ENCODE measurements at regions of chr12 and their contacts with region 1.

Region 1: DNA sequence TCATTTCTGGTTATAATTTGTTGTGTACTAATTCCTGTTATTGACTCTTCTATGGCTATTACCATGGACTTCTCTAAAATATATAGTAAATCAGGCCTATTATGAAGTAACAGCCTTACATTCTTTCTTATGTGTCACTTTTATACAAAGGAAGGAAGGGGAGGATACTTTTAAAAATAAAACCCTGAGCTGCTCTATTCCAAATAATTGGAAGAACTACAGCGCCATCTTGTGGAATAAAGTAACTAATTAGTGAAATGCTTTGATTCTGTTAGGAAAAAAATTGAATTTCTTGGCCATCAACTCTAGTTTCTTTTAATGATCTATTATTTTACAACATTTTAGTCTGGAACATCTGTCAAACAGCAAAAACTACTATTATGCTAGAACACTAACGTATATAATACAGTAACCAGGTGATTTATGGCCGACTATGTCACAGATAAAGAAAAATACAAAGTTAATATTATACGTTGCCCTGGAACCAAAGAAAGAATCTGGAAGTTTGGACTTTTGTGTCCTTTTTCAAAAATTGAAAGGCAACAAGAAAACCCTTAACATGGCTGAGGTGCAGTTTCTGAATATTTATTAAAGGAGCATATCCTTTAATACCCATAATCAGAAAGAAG is 55.0 kb upstream of the NELL2 start:
- DNase-seq: no peak
- H3K4me3 ChIP-seq: no peak overlapping the region
- H3K27ac ChIP-seq: no peak overlapping the region
- H3K4me1 ChIP-seq: no peaks in the 10 kb centered on the region
- H3K27me3 ChIP-seq: no peaks in the 10 kb centered on the region
- CTCF ChIP-seq: peak; percentile 48 to 69 (median 57)
- EP300 ChIP-seq: no peak
- POLR2A ChIP-seq: no peak

Region 2: GRCh38 chr12:43988838-43989560 is 942.1 kb before region 1 on chr12:
- in situ Hi-C with region 1: loop called in 1 of 4 experiments (anchors 25 kb)
- intact Hi-C with region 1: no loop called
- DNase-seq: no peak
- H3K4me3 ChIP-seq: no peak overlapping the region
- H3K27ac ChIP-seq: no peak overlapping the region
- H3K4me1 ChIP-seq: no peaks in the 10 kb centered on the region
- H3K27me3 ChIP-seq: no peaks in the 10 kb centered on the region
- CTCF ChIP-seq: no peak
- EP300 ChIP-seq: no peak
- POLR2A ChIP-seq: no peak

Region 3: GRCh38 chr12:44015335-44015941 is 915.6 kb before region 1 on chr12:
- in situ Hi-C with region 1: loop called in 3 of 4 experiments (anchors 10 to 25 kb)
- intact Hi-C with region 1: loop called (anchors 10 kb)
- DNase-seq: no peak
- H3K4me3 ChIP-seq: no peak overlapping the region
- H3K27ac ChIP-seq: no peak overlapping the region
- H3K4me1 ChIP-seq: peaks cover 0 to 4% (median 0%) of the 10 kb centered on the region in 4 donors
- H3K27me3 ChIP-seq: no peaks in the 10 kb centered on the region
- CTCF ChIP-seq: peak; percentile 32 to 54 (median 51)
- EP300 ChIP-seq: no peak
- POLR2A ChIP-seq: no peak

Region 4: DNA sequence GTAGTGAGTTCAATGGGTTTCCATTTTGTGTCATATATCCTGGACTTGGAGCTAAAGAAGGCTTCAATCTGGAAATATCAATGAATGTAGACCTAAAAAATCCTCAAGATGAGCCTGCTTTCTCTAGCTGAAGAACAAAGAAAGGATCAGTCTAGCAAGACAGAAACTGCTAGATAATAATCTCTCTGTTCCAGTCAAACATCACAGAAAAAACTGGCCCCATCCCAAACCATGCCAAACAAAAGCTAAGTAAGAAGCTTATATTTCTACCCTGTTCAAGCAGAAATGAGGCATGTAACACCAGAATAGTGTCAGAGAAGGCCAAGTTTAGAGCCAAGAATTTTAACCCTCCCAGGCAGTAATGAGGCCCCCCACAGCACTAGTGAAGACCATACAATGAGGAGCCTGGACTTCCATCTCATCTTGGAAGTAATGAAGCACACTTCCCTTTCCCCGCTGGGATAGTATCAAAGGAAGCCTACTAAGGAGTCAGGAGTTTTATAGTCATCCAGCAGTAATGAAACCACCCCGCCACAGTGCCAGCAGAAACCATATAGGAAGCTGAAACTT is 150.8 kb before region 1 on chr12:
- in situ Hi-C with region 1: loop called in 2 of 4 experiments (anchors 10 kb)
- intact Hi-C with region 1: no loop called
- DNase-seq: no peak
- H3K4me3 ChIP-seq: no peak overlapping the region
- H3K27ac ChIP-seq: no peak overlapping the region
- H3K4me1 ChIP-seq: no peaks in the 10 kb centered on the region
- H3K27me3 ChIP-seq: no peaks in the 10 kb centered on the region
- CTCF ChIP-seq: no peak
- EP300 ChIP-seq: no peak
- POLR2A ChIP-seq: no peak

Region 5: GRCh38 chr12:45042599-45042998 is 111.5 kb after region 1 on chr12:
- in situ Hi-C with region 1: no loop called
- intact Hi-C with region 1: no loop called
- DNase-seq: no peak
- H3K4me3 ChIP-seq: no peak overlapping the region
- H3K27ac ChIP-seq: no peak overlapping the region
- H3K4me1 ChIP-seq: no peaks in the 10 kb centered on the region
- H3K27me3 ChIP-seq: peaks cover 2% of the 10 kb centered on the region
- CTCF ChIP-seq: no peak
- EP300 ChIP-seq: no peak
- POLR2A ChIP-seq: no peak

Region 6: GRCh38 chr12:45234139-45234846 is 303.2 kb after region 1 on chr12:
- in situ Hi-C with region 1: no loop called
- intact Hi-C with region 1: no loop called
- DNase-seq: no peak
- H3K4me3 ChIP-seq: no peak overlapping the region
- H3K27ac ChIP-seq: peak overlapping the region; percentile 80 to 86 (median 86)
- H3K4me1 ChIP-seq: peaks cover 17 to 47% (median 29%) of the 10 kb centered on the region in 4 donors
- H3K27me3 ChIP-seq: no peaks in the 10 kb centered on the region
- CTCF ChIP-seq: peak in 1 of 5 experiments; percentile 26
- EP300 ChIP-seq: peak; percentile 46
- POLR2A ChIP-seq: no peak